Activated CD8-positive, alpha-beta memory T cell treated with anti-CD3 and anti-CD28 coated beads, Interleukin-2, amount 10 ng/mL, durations not matched to agents 7 days and 5 days (primary cell): ENCODE measurements at regions of chr12 and their contacts with region 1.

Region 1: DNA sequence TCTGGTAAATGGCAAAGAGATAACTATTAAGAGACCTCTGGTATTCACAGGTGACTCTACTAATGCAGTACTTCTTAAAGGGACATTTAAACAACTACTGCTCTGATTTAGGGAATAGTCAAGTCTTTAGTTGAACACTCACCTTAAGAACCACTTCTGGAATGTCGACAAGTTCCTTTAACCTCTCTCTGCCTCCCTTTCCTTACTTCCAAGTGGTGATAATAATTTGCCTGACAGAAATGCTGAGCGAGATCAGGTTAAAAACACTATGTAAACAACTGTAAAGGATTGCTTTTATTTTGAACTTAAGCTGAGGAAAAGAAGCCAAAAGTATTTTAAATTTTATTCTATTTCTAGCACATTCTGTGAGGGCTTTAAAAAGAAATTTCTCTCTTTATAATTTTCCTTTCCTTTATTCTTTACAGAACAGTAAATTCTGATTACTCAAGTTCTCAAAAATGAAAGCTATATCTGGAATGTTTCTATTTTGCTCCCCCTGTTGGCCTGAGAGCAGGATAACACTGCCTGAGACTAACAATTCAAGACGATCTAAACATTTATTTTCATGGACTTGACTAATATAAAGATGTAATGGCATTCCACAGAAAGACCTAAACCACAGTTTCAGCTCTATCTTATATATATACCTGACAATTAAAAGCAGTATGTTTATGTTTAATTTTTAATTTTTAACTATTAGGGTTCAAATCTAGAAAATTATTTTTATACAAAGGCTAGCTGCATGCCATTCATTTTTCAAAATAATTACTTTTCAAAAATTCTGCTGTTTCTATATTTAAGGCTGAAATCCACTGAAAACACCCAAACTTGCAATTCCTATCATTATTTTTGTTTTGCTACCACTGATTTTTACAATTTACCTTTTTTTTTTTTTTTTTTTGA is 29.2 kb downstream of the ZCCHC8 start:
- DNase-seq: no peak
- ATAC-seq: peak; percentile 78
- H3K4me3 Mint-ChIP-seq: no peak overlapping the region
- H3K27ac Mint-ChIP-seq: peak overlapping the region; percentile 59
- H3K4me1 Mint-ChIP-seq: peaks cover 27% of the 10 kb centered on the region
- H3K27me3 Mint-ChIP-seq: no peaks in the 10 kb centered on the region

Region 2: DNA sequence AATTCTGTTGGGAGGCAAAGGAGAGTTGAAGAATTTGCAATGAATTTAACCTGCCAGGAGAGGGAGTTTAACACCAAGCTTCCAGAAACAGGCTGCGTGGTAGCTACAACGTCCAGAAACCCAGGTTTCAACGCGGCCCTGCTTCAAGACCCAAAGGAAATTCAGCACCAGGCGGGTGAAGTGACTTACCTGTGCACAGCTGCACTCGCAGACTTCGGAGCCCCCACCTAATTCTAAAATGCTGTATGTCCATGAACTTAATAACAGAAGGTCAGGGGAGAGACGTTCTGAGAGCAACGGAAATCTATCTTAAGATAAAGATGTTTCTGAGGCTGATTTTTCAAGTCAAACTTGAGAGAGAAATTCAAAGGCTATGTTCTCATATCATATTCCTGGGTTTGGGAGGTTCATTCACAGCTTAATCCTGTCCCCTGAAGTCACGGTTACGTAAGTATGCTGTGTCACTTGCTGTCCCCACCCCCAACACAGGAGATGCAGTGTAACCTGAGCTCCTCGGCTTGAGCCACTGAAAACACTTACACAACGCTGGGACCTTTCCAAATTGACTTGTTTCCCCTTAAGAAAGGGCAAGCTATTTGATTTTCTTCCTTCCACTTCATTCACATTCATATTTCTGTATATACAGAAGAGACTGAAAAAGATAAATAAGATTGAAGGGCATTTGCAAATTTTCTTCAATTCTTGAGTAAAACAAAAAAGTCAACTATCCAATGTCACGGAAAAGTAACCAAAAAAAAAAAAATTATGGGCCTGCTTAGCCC is 71.8 kb before region 1 on chr12:
- CTCF ChIA-PET with region 1: interaction called, 177 read pairs
- DNase-seq: peak; percentile 68
- ATAC-seq: peak; percentile 87
- H3K4me3 Mint-ChIP-seq: peak overlapping the region; percentile 45
- H3K27ac Mint-ChIP-seq: peak overlapping the region; percentile 68
- H3K4me1 Mint-ChIP-seq: peaks cover 34% of the 10 kb centered on the region
- H3K27me3 Mint-ChIP-seq: no peaks in the 10 kb centered on the region

Region 3: DNA sequence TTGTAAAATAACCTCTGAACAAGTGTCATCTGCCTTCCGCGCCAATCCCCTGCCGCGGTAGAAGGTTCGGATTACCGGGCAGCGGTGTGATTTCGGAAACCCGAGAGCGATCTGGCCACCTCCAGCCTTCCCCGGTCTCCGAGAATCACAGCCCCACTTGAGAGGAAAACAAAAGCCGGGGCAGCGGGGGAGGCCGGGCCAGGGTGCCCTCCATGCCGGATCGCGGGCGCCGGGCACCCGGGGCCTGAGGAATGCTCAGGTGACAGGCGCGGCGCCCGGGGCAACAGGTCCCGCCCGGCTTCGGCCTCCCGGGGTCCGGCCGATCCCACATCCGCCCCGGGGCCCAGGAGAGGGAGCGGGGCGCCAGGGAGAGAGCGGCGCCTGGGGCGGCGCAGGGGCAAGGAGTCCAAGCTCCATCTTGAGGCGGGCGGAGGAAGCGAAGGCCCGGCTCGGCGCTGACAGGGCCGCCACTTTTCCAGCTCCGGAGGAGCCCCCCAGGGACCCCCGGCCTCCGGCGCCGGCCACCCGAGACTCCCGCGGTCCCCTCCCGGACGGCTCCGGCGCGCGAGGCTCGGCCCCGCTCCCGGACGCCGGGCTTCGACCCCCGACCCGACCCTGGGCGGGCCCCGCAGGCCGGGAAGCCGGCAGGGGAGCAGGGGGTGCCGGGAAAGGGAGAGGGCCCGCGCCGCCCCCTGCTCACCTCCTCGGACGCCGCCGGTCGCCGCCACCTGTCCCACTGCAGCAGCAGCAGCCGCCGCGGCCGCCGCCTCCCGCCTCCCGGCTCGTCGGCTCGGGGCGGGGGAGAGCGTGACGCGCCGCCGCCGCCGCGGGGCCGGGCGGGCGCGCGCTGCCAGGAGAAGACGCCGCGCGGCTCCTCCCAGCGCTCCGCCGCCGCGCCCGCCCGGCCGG is 49.5 kb before region 1 on chr12 and contains the start of gene CLIP1:
- CTCF ChIA-PET with region 1: interaction called, 30 read pairs
- DNase-seq: peak; percentile 70
- ATAC-seq: peak; percentile 83
- H3K4me3 Mint-ChIP-seq: peak within 1 kb of the TSS; percentile 83
- H3K27ac Mint-ChIP-seq: peak within 1 kb of the TSS; percentile 83
- H3K4me1 Mint-ChIP-seq: peaks cover 37% of the 10 kb centered on the region
- H3K27me3 Mint-ChIP-seq: no peaks in the 10 kb centered on the region
- total RNA-seq, gene CLIP1: 56.2 to 75.7 TPM

Region 4: GRCh38 chr12:122459211-122459610 is 12.4 kb before region 1 on chr12:
- CTCF ChIA-PET with region 1: interaction called, 18 read pairs
- DNase-seq: no peak
- ATAC-seq: no peak
- H3K4me3 Mint-ChIP-seq: no peak overlapping the region
- H3K27ac Mint-ChIP-seq: no peak overlapping the region
- H3K4me1 Mint-ChIP-seq: peaks cover 23% of the 10 kb centered on the region
- H3K27me3 Mint-ChIP-seq: no peaks in the 10 kb centered on the region

Region 5: GRCh38 chr12:122500685-122501488 is 29.3 kb after region 1 on chr12 and contains the start of gene ZCCHC8:
- CTCF ChIA-PET with region 1: interaction called, 22 read pairs
- DNase-seq: peak; percentile 99
- ATAC-seq: peak; percentile 94
- H3K4me3 Mint-ChIP-seq: peak within 1 kb of the TSS; percentile 97
- H3K27ac Mint-ChIP-seq: peak within 1 kb of the TSS; percentile 99
- H3K4me1 Mint-ChIP-seq: peaks cover 36% of the 10 kb centered on the region
- H3K27me3 Mint-ChIP-seq: no peaks in the 10 kb centered on the region
- total RNA-seq, gene ZCCHC8: 45.2 to 45.3 TPM

Region 6: DNA sequence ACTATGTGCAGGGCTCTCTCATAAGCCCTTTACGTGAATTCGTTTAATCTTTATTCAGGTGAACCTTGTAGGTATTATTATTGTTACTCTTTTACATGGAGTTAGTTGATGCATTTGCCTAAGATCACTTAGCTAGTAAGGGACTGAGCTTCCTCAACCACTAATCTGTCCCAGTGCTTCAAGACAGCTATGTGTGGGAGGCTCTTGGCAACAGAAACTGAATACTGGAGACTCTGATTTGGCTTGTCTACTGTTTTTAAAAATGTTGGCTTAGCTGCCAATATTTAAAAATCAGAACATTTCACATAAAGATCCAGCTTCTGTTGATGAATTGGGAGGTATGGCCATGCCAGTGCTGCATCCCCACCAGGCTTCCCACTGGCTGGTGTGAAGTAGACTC is 62.3 kb after region 1 on chr12:
- CTCF ChIA-PET with region 1: no interaction called
- DNase-seq: no peak
- ATAC-seq: no peak
- H3K4me3 Mint-ChIP-seq: no peak overlapping the region
- H3K27ac Mint-ChIP-seq: no peak overlapping the region
- H3K4me1 Mint-ChIP-seq: peaks cover 16% of the 10 kb centered on the region
- H3K27me3 Mint-ChIP-seq: no peaks in the 10 kb centered on the region